RWPE1 (cell line): ENCODE measurements at regions of chr1 and their contacts with region 1.

Region 1: GRCh38 chr1:21659099-21659923 is 9.8 kb downstream of the RAP1GAP start:
- DNase-seq: peak; percentile 88
- H3K27ac ChIP-seq: no peak overlapping the region
- CTCF ChIP-seq: peak; percentile 95

Region 2: GRCh38 chr1:21638531-21639356 is 20.6 kb before region 1 on chr1:
- CTCF ChIA-PET with region 1: interaction called, 13 read pairs
- POLR2A ChIA-PET with region 1: no interaction called
- DNase-seq: peak; percentile 90
- H3K27ac ChIP-seq: peak overlapping the region; percentile 85
- CTCF ChIP-seq: no peak

Region 3: DNA sequence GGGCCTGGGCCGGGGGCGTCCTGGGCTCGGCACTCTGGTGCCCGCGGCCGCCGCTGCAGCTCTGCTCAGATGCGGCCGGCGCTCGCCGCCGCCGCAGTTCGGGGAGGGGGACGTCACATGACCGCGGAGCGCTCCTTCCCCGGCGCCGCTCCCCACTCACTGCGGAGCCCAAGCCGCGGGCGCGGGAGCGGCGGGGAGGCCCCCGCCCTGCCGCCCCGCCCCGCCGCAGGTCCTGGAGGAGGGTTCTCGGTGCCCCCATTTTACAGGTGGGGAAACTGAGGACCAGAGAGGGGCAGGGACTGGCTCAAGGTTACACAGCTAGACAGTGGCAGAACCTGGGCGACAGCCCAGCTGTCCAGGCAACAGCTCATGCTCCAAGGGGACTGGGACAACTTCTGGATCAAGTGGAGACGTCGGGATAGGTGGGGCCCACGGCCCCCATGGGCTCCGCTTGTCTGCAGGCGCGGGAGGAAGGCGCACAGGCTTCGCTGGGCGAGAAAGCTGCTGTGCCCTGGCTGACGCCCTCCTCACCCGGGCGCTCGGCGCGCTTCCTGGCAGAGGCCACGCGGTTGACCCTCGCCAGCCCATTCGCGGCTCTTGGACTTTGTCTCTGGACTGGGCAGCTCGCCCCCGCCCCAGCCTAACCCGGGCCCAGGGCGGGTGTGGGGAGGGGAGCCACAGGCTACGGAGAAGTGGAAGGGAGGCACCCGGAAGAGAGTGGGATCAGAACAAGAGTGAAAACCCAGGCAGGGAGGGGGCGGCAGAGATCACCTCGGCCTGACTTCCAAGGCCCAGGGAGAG is 10.1 kb after region 1 on chr1 and contains the start of gene RAP1GAP:
- CTCF ChIA-PET with region 1: no interaction called
- POLR2A ChIA-PET with region 1: no interaction called
- DNase-seq: no peak
- H3K27ac ChIP-seq: no peak within 1 kb of the TSS
- CTCF ChIP-seq: no peak